ENCODE measurements at regions of chr17 and their contacts with region 1.

Region 1: GRCh38 chr17:46026166-46027047 is 27.4 kb downstream of the STH start:
- DNase-seq: no peak
- ATAC-seq: peak; percentile 44
- H3K4me3 Mint-ChIP-seq: no peak overlapping the region
- H3K27ac Mint-ChIP-seq: peak overlapping the region; percentile 60; the same call in 1 of the 2 replicates
- H3K4me1 Mint-ChIP-seq: peaks cover 28% of the 10 kb centered on the region
- H3K27me3 Mint-ChIP-seq: no peaks in the 10 kb centered on the region
- CTCF ChIP-seq: no peak

Region 2: GRCh38 chr17:46010597-46011171 is 15.7 kb before region 1 on chr17:
- CTCF ChIA-PET with region 1: no interaction called
- POLR2A ChIA-PET with region 1: no interaction called
- DNase-seq: no peak
- ATAC-seq: peak; percentile 57
- H3K4me3 Mint-ChIP-seq: no peak overlapping the region
- H3K27ac Mint-ChIP-seq: no peak overlapping the region
- H3K4me1 Mint-ChIP-seq: no peaks in the 10 kb centered on the region
- H3K27me3 Mint-ChIP-seq: no peaks in the 10 kb centered on the region
- CTCF ChIP-seq: no peak

Region 3: GRCh38 chr17:46144246-46144645 is 117.8 kb after region 1 on chr17:
- CTCF ChIA-PET with region 1: no interaction called
- POLR2A ChIA-PET with region 1: interaction called, 10 read pairs
- DNase-seq: no peak
- ATAC-seq: no peak
- H3K4me3 Mint-ChIP-seq: no peak overlapping the region
- H3K27ac Mint-ChIP-seq: peak overlapping the region; percentile 94
- H3K4me1 Mint-ChIP-seq: peaks cover 74% of the 10 kb centered on the region
- H3K27me3 Mint-ChIP-seq: no peaks in the 10 kb centered on the region
- CTCF ChIP-seq: no peak